ENCODE measurements at regions of chr2 and their contacts with region 1.

Region 1: GRCh38 chr2:47782671-47783485 is at the start of gene MSH6:
- DNase-seq: peak; percentile 90 to 93
- ATAC-seq: peak; percentile 99 to 100 (median 100)
- H3K4me3 ChIP-seq: peak within 1 kb of the TSS; percentile 97
- H3K27ac ChIP-seq: peak within 1 kb of the TSS; percentile 82
- H3K4me1 ChIP-seq: no peaks in the 10 kb centered on the region
- H3K27me3 ChIP-seq: no peaks in the 10 kb centered on the region
- CTCF ChIP-seq: no peak
- total RNA-seq, gene MSH6: 12.0 to 21.1 (median 17.3) TPM

Region 2: DNA sequence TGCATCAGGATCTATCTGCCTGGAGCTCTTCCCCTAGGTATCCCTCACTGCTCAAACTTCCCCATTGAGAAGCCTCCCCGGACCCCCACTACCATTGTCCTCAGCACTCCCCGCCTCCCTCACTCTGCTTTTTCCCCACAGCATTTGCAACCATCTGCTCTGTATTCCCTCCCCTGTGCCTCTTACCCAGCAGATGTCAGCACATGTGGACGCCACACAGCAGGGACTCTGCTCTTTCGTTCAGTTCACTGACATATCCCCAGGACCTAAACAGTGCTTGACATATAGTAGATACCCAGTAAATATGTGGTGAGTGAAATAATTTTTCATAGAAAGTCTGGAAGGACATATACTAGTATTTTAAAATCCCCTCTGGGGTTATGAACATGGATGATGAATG is 1202.5 kb before region 1 on chr2:
- intact Hi-C with region 1: loop called in 1 of 2 experiments (anchors 5 kb)
- DNase-seq: no peak
- ATAC-seq: no peak
- H3K4me3 ChIP-seq: no peak overlapping the region
- H3K27ac ChIP-seq: no peak overlapping the region
- H3K4me1 ChIP-seq: no peaks in the 10 kb centered on the region
- H3K27me3 ChIP-seq: no peaks in the 10 kb centered on the region
- CTCF ChIP-seq: no peak

Measured in psoas muscle (tissue), 8 donors.